GM18951 (cell line): ENCODE measurements at regions of chr7 and their contacts with region 1.

Region 1: GRCh38 chr7:27921081-27921836 is 181.3 kb downstream of the TAX1BP1 start:
- POLR2A ChIP-seq: no peak

Region 2: GRCh38 chr7:27196287-27196767 is 724.9 kb before region 1 on chr7:
- in situ Hi-C with region 1: loop called (anchors 10 kb)
- POLR2A ChIP-seq: no peak

Region 3: DNA sequence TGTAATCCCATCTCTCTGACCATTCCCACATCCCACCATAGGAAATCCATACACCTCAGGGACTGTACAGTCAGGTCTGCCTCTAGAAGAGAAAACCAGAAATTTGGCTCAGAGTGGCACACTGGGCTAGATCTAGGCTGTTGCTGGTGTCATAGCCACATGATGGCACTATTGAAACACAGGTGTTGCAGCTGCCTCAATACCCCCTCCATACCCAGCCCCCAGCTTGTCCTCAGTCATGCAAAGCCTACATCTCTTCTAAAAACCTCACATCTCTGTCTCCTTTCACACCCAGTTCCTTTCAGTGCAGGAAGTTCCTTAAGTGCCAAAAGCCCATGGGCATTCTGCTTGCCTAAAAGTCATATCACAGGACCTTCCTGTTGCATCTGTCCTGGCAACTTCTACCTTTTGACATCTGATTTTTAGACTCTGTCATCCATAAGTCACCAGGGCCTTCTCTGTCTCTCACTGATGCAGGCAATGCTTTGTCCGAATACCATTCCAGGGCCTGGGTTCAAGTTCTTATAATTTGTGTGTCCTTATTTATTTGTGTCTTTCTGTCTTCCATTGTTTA is 231.6 kb before region 1 on chr7:
- in situ Hi-C with region 1: loop called (anchors 25 kb)
- POLR2A ChIP-seq: no peak